Heart left ventricle (tissue), 16 donors: ENCODE measurements at regions of chr1 and their contacts with region 1.

Region 1: GRCh38 chr1:224182866-224183590 is at the start of gene DEGS1:
- DNase-seq: peak; percentile 80 to 92 (median 84)
- ATAC-seq: peak; percentile 78 to 96 (median 94)
- H3K4me3 ChIP-seq: peak within 1 kb of the TSS; percentile 72 to 100 (median 87)
- H3K27ac ChIP-seq: peak within 1 kb of the TSS; percentile 69 to 98 (median 96)
- H3K4me1 ChIP-seq: peaks cover 0 to 39% (median 18%) of the 10 kb centered on the region in 12 donors
- H3K27me3 ChIP-seq: no peaks in the 10 kb centered on the region
- CTCF ChIP-seq: no peak
- POLR2A ChIP-seq: peak in 1 of 2 donors; percentile 96
- total RNA-seq, gene DEGS1: 35.8 to 75.2 (median 46.3) TPM

Region 2: GRCh38 chr1:224223819-224224714 is 41.0 kb after region 1 on chr1:
- intact Hi-C with region 1: no loop called
- DNase-seq: peak in 1 of 5 donors; percentile 2
- ATAC-seq: peak in 3 of 4 donors; percentile 22 to 57 (median 53)
- H3K4me3 ChIP-seq: no peak overlapping the region
- H3K27ac ChIP-seq: peak overlapping the region in 1 of 12 donors; percentile 52
- H3K4me1 ChIP-seq: peaks cover 0 to 14% (median 0%) of the 10 kb centered on the region in 12 donors
- H3K27me3 ChIP-seq: no peaks in the 10 kb centered on the region
- CTCF ChIP-seq: no peak
- POLR2A ChIP-seq: no peak

Region 3: DNA sequence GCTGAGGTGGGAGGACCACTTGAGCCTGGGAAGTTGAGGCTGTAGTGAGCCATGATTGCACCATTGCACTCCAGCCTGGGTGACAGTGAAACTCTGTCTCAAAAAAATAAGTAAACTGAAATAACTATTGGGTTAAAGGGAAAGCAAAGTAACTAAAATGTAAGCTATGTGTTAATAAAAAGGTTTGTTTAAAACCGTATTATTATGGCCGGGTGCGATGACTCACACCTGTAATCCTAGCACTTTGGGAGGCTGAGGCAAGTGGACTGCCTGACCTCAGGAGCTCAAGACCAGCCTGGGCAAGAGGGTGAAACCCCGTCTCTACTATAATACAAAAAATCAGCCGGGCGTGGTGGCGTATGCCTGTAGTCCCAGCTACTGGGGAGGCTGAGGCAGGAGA is 119.9 kb after region 1 on chr1:
- intact Hi-C with region 1: no loop called
- DNase-seq: no peak
- ATAC-seq: no peak
- H3K4me3 ChIP-seq: no peak overlapping the region
- H3K27ac ChIP-seq: no peak overlapping the region
- H3K4me1 ChIP-seq: no peaks in the 10 kb centered on the region
- H3K27me3 ChIP-seq: no peaks in the 10 kb centered on the region
- CTCF ChIP-seq: no peak
- POLR2A ChIP-seq: no peak

Region 4: GRCh38 chr1:224329842-224330753 is 147.1 kb after region 1 on chr1 and contains the start of gene NVL:
- intact Hi-C with region 1: loop called in 3 of 10 experiments (anchors 5 to 10 kb)
- DNase-seq: peak; percentile 85 to 90 (median 88)
- ATAC-seq: peak; percentile 93 to 98 (median 98)
- H3K4me3 ChIP-seq: peak within 1 kb of the TSS; percentile 51 to 98 (median 88)
- H3K27ac ChIP-seq: peak within 1 kb of the TSS; percentile 88 to 98 (median 92)
- H3K4me1 ChIP-seq: peaks cover 0 to 28% (median 20%) of the 10 kb centered on the region in 12 donors
- H3K27me3 ChIP-seq: no peaks in the 10 kb centered on the region
- CTCF ChIP-seq: peak in 1 of 12 donors; percentile 13
- POLR2A ChIP-seq: peak in 1 of 2 donors; percentile 56
- total RNA-seq, gene NVL: 4.8 to 14.8 (median 8.7) TPM